Pancreas (tissue), 10 donors: ENCODE measurements at regions of chr1 and their contacts with region 1.

Region 1: GRCh38 chr1:86380257-86380861 is 15.8 kb downstream of the ODF2L start:
- DNase-seq: no peak
- ATAC-seq: peak in 3 of 4 donors; percentile 87 to 93 (median 91)
- H3K4me3 ChIP-seq: no peak overlapping the region
- H3K27ac ChIP-seq: no peak overlapping the region
- H3K4me1 ChIP-seq: no peaks in the 10 kb centered on the region
- H3K27me3 ChIP-seq: no peaks in the 10 kb centered on the region
- CTCF ChIP-seq: peak; percentile 41 to 60 (median 50)

Region 2: DNA sequence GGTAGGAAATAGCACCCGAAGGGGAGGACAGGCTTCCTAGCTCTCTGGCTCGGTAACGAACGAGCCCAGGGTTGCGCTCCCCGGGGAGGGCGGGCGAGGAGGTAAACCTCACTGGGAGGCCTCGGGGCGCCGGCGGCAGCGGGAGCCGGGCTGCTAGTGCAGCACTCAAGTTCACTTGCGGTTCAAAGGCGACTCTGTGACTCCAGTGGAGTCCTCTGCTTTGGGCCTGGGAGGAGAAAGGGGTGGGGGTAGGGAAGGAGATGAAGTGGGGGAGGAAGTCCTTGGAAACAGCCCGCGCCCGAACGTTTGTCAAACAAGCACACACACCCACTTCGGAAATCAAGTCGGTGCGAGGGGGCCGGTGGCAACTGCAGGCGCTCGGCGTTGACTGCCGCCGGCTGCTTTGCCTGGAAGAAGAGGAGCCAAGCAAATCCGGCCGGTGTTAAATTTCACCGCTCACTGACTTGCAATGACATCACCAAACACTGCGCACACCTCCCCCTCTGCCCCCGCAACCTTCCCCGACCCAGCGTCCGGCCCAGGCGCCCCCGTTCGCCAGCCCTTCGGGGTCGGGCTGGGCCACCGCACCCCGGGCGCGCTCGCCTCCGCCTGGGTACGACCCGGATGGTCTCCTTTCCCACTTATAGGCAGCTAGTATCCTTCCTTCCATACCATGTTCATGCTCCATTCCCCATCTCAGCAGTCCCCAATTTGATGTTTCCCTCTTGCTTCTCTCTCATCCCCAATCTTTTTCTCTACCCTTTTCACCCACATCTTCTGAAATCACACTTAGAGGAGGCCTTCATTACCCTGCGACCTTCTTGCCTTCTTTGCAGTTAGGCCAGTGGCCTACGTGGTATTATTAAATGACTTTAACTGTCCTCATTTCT is 223.5 kb before region 1 on chr1 and contains the start of gene COL24A1:
- intact Hi-C with region 1: no loop called
- DNase-seq: peak in 5 of 6 donors; percentile 10 to 71 (median 20)
- ATAC-seq: peak in 3 of 4 donors; percentile 54 to 66 (median 55)
- H3K4me3 ChIP-seq: peak within 1 kb of the TSS in 3 of 4 donors; percentile 3 to 41 (median 7)
- H3K27ac ChIP-seq: no peak within 1 kb of the TSS
- H3K4me1 ChIP-seq: no peaks in the 10 kb centered on the region
- H3K27me3 ChIP-seq: peaks cover 0 to 21% (median 0%) of the 10 kb centered on the region in 4 donors
- CTCF ChIP-seq: no peak
- total RNA-seq, gene COL24A1: 0.06 to 0.34 (median 0.31) TPM in 3 of 6 donors, not detected in the others

Region 3: DNA sequence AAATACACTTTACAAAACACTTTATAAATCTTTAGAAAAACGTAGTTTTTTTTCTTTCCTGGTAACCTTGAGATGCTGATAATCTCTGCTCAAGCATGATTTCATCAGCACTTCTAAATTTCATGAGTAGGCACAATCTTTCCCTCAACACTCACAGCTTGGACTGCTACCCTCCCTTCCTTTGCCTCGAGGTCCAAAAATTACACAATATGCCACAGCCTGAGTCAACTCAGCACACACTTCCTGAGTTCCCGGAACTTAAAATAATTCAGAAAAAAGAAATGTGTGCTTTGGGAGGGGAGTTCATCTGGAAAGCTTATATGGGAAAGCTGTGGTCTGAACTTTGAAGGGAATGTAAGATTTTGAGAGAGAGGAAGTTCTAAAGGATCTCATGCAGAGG is 49.5 kb after region 1 on chr1:
- intact Hi-C with region 1: no loop called
- DNase-seq: peak in 2 of 6 donors; percentile 19 to 45
- ATAC-seq: peak in 3 of 4 donors; percentile 84 to 96 (median 92)
- H3K4me3 ChIP-seq: no peak overlapping the region
- H3K27ac ChIP-seq: peak overlapping the region in 2 of 4 donors; percentile 23 to 51
- H3K4me1 ChIP-seq: peaks cover 0 to 5% (median 0%) of the 10 kb centered on the region in 3 donors
- H3K27me3 ChIP-seq: no peaks in the 10 kb centered on the region
- CTCF ChIP-seq: no peak

Region 4: GRCh38 chr1:86499987-86500593 is 119.7 kb after region 1 on chr1:
- intact Hi-C with region 1: loop called in 2 of 3 experiments (anchors 10 kb)
- DNase-seq: no peak
- ATAC-seq: peak in 2 of 4 donors; percentile 46 to 74
- H3K4me3 ChIP-seq: no peak overlapping the region
- H3K27ac ChIP-seq: no peak overlapping the region
- H3K4me1 ChIP-seq: no peaks in the 10 kb centered on the region
- H3K27me3 ChIP-seq: no peaks in the 10 kb centered on the region
- CTCF ChIP-seq: peak; percentile 65 to 94 (median 80)